Astrocyte of the cerebellum (primary cell): ENCODE measurements at regions of chr16 and their contacts with region 1.

Region 1: GRCh38 chr16:46673320-46674013 is 15.5 kb downstream of the VPS35 start:
- DNase-seq: peak; percentile 31
- H3K4me3 ChIP-seq: no peak overlapping the region
- CTCF ChIP-seq: peak; percentile 97

Region 2: DNA sequence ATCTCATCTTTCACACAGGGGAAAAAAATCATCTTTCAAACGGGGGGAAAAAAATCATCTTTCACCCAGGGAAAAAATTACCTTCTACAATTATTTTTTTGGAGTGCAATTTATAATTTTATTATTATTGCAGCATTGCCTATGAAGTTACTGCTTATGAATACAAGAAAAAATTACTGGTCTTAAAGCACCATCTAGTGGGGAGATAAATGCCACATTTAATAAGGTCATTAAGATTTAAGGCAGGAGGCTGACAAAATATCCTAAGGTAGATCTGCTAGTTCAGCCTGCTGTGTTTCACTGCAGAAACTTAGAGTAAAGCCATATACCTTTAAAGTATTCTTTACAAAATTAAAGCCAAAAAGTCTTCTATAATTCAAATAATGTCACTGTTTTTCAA is 65.9 kb before region 1 on chr16:
- in situ Hi-C with region 1: no loop called
- DNase-seq: peak; percentile 71
- H3K4me3 ChIP-seq: no peak overlapping the region
- CTCF ChIP-seq: peak; percentile 32

Region 3: GRCh38 chr16:46649221-46649927 is 24.1 kb before region 1 on chr16:
- in situ Hi-C with region 1: loop called (anchors 5 kb)
- DNase-seq: no peak
- H3K4me3 ChIP-seq: no peak overlapping the region
- CTCF ChIP-seq: no peak